ENCODE measurements at regions of chr1 and their contacts with region 1.

Region 1: GRCh38 chr1:232630047-232630893 is at the start of gene SIPA1L2:
- DNase-seq: no peak
- ATAC-seq: peak; percentile 98
- H3K4me3 ChIP-seq: peak within 1 kb of the TSS; percentile 57 to 83
- H3K27ac ChIP-seq: peak within 1 kb of the TSS; percentile 57
- H3K4me1 ChIP-seq: no peaks in the 10 kb centered on the region; the same call in none of the 2 replicates
- H3K27me3 ChIP-seq: peaks cover 21% of the 10 kb centered on the region
- CTCF ChIP-seq: peak; percentile 73
- total RNA-seq, gene SIPA1L2: 5.2 TPM

Region 2: DNA sequence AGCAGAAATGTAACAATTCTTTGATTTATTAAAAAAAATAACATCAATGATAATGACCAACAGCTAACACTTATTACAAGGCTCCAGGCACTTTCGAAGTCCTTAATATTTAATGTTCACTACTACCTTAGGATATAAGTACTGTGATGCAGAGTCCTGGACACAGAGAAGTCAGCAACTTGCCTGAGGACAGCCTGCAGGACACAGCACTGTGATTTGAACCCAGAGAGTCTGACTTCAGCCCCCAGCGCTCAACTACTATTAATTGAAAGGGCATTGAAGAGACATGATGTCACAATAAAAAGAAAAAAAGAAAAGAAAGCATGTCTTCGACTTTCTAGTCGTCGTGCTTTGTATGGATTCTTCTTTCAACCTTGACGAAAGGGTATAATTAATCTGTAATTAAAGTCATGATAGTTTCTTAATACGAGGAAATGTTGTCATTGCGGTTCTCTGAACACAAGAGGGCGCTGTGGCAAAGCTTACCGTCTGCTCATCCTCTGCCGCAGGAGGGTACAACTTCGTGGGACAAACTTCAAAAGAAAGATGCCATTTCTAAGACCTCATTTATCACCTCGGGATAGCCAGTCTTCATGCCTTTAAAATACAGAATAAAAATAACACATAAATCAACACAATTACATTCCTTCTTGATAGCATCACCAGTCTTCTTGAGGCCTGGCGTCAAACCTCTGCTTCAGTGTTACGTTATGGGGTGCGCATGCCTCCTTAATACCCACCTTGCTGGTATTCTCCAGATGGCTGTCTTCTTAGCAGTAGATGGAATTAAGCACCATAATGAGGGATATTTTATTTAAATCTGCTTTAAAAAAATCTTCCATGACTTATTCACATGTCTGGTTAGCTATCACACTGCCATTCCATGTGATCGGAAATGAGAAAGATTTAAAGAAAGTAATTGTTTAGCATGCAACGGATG is 763.6 kb before region 1 on chr1:
- CTCF ChIA-PET with region 1: no interaction called
- POLR2A ChIA-PET with region 1: no interaction called
- in situ Hi-C with region 1: no loop called
- intact Hi-C with region 1: loop called (anchors 2 kb)
- DNase-seq: peak; percentile 35
- ATAC-seq: no peak
- H3K4me3 ChIP-seq: no peak overlapping the region
- H3K27ac ChIP-seq: no peak overlapping the region
- H3K4me1 ChIP-seq: no peaks in the 10 kb centered on the region
- H3K27me3 ChIP-seq: no peaks in the 10 kb centered on the region
- CTCF ChIP-seq: peak; percentile 88

Region 3: GRCh38 chr1:232508130-232508701 is 122.1 kb before region 1 on chr1:
- CTCF ChIA-PET with region 1: interaction called, 4 read pairs
- POLR2A ChIA-PET with region 1: no interaction called
- in situ Hi-C with region 1: no loop called
- intact Hi-C with region 1: loop called (anchors 10 kb)
- DNase-seq: no peak
- ATAC-seq: peak; percentile 70
- H3K4me3 ChIP-seq: no peak overlapping the region
- H3K27ac ChIP-seq: no peak overlapping the region
- H3K4me1 ChIP-seq: no peaks in the 10 kb centered on the region
- H3K27me3 ChIP-seq: no peaks in the 10 kb centered on the region
- CTCF ChIP-seq: no peak

Region 4: GRCh38 chr1:232837087-232837486 is 206.8 kb after region 1 on chr1:
- CTCF ChIA-PET with region 1: no interaction called
- POLR2A ChIA-PET with region 1: no interaction called
- in situ Hi-C with region 1: no loop called
- intact Hi-C with region 1: no loop called
- DNase-seq: no peak
- ATAC-seq: no peak
- H3K4me3 ChIP-seq: no peak overlapping the region
- H3K27ac ChIP-seq: no peak overlapping the region
- H3K4me1 ChIP-seq: no peaks in the 10 kb centered on the region
- H3K27me3 ChIP-seq: no peaks in the 10 kb centered on the region
- CTCF ChIP-seq: no peak

Region 5: DNA sequence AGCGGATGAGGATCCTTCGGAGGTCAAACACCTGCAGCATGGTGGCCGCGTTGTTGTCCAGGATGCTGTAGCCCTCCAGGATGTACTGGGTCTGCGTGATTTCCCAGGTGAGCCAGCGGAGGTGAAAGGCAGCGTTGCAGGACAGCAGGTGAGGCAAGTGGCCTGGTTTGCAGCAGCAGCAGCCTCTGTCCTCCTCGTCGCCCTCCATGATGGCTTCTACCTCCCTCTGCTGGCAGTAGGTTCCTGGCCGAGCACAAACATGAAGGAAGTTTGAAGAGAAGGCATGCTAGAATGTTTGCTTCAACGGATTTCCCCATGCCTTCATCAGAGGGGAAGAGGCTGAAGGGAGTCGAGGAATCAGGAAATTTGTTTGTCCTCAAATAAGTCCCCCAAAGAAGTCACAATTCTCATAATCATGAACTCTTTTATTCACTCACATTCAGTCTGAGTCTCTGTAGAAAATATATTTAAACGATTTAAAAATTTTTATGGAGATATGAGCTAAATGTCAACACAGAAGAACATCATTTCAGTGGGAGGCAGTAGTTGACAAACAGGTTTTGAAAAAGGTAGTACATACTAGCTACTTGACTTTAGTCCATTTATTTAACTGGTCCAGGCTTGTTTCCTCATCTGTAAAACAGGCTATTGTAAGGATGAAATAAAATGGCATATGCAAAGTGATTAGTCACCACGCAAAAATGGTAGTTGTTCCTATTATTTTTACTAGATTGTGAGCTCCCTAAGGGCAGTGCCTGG is 395.1 kb after region 1 on chr1:
- CTCF ChIA-PET with region 1: no interaction called
- POLR2A ChIA-PET with region 1: no interaction called
- in situ Hi-C with region 1: no loop called
- intact Hi-C with region 1: loop called (anchors 10 kb)
- DNase-seq: peak; percentile 15
- ATAC-seq: peak; percentile 53; the same call in 1 of the 2 replicates
- H3K4me3 ChIP-seq: no peak overlapping the region
- H3K27ac ChIP-seq: no peak overlapping the region
- H3K4me1 ChIP-seq: no peaks in the 10 kb centered on the region
- H3K27me3 ChIP-seq: peaks cover 3% of the 10 kb centered on the region; the same call in 1 of the 2 replicates
- CTCF ChIP-seq: peak; percentile 66

Region 6: GRCh38 chr1:233172227-233172626 is 542.0 kb after region 1 on chr1:
- CTCF ChIA-PET with region 1: no interaction called
- POLR2A ChIA-PET with region 1: no interaction called
- in situ Hi-C with region 1: no loop called
- intact Hi-C with region 1: loop called (anchors 10 kb)
- DNase-seq: no peak
- ATAC-seq: no peak
- H3K4me3 ChIP-seq: no peak overlapping the region
- H3K27ac ChIP-seq: no peak overlapping the region
- H3K4me1 ChIP-seq: no peaks in the 10 kb centered on the region
- H3K27me3 ChIP-seq: no peaks in the 10 kb centered on the region
- CTCF ChIP-seq: peak; percentile 27; the same call in 1 of the 2 replicates

Region 7: GRCh38 chr1:233240829-233241682 is 610.8 kb after region 1 on chr1:
- CTCF ChIA-PET with region 1: no interaction called
- POLR2A ChIA-PET with region 1: no interaction called
- in situ Hi-C with region 1: no loop called
- intact Hi-C with region 1: loop called (anchors 1 kb)
- DNase-seq: peak; percentile 36
- ATAC-seq: peak; percentile 96
- H3K4me3 ChIP-seq: 0 out of 4 replicates have a peak overlapping the region, but pooled peaks of 1 of the 2 experiments have one; percentile 6
- H3K27ac ChIP-seq: no peak overlapping the region
- H3K4me1 ChIP-seq: no peaks in the 10 kb centered on the region
- H3K27me3 ChIP-seq: no peaks in the 10 kb centered on the region
- CTCF ChIP-seq: peak; percentile 91